ENCODE measurements at regions of chr17 and their contacts with region 1.

Region 1: DNA sequence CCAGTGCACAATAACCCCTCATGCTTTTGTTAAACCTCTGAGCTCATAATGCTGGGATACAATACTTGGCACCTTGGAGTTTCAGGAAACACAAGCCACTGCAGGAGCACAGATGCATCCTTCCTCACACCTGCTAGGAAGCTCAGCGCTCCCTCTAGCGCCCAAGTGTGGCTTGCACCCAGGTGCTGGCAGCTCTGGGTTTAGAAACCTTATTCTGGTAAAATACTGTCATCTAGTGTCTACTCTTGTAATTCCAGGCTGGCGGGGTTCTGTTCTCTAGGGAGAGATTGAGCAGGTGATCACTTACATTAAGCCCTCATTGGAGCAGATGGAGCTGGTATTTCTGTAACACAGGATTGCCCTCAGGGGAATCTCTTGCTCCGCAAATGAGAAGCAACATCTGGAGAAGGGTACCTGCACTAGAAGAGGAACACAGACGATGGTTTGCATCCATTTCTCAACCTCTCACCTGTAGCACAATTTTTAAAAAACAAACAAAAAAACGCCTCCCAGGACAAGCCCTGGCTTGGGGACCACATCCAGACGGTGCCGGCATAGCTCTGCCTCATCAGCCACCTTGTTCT is 1.5 kb downstream of the CCL1 start:
- DNase-seq: peak; percentile 97
- ATAC-seq: peak; percentile 96
- H3K4me3 Mint-ChIP-seq: no peak overlapping the region
- H3K27ac Mint-ChIP-seq: no peak overlapping the region
- H3K4me1 Mint-ChIP-seq: peaks cover 5% of the 10 kb centered on the region
- H3K27me3 Mint-ChIP-seq: peaks cover 13% of the 10 kb centered on the region; the same call in 1 of the 2 replicates
- CTCF ChIP-seq: peak; percentile 89

Region 2: GRCh38 chr17:34156741-34157589 is 204.6 kb before region 1 on chr17:
- CTCF ChIA-PET with region 1: interaction called, 24 read pairs
- POLR2A ChIA-PET with region 1: no interaction called
- DNase-seq: peak; percentile 85
- ATAC-seq: peak; percentile 45
- H3K4me3 Mint-ChIP-seq: peak overlapping the region; percentile 85
- H3K27ac Mint-ChIP-seq: peak overlapping the region; percentile 98
- H3K4me1 Mint-ChIP-seq: peaks cover 86% of the 10 kb centered on the region
- H3K27me3 Mint-ChIP-seq: peaks cover 14% of the 10 kb centered on the region
- CTCF ChIP-seq: no peak

Region 3: DNA sequence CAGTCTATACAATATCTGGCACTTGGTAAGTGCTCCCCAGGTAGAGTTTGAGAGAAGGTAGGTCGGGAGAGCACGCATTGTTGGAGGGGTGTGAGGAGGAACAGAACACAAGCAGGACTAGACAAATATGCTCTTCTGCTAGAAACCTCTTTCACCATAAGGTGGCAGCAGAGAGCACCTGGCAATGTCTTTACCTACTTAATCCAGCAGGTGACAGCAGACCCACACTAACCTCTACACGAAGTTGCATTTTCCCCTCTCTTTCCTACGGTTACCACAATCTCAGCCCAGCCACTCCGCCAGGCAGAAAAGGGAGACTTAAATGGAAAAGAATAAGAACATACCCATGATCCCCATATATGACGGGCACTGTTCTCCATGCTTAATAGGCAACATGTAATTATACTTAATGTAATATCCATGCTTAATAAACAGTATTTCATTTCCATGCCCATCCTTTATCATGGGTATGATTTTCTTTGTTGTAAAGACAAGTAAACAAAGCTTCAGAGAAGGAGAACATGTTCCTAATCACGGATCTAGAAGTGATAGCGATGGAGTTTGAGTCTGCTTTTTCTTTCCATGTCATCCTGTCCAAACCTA is 161.5 kb before region 1 on chr17:
- CTCF ChIA-PET with region 1: interaction called, 346 read pairs
- POLR2A ChIA-PET with region 1: interaction called, 7 read pairs
- DNase-seq: peak; percentile 77
- ATAC-seq: peak; percentile 94
- H3K4me3 Mint-ChIP-seq: no peak overlapping the region
- H3K27ac Mint-ChIP-seq: no peak overlapping the region
- H3K4me1 Mint-ChIP-seq: peaks cover 13% of the 10 kb centered on the region
- H3K27me3 Mint-ChIP-seq: peaks cover 11% of the 10 kb centered on the region
- CTCF ChIP-seq: peak; percentile 100

Region 4: DNA sequence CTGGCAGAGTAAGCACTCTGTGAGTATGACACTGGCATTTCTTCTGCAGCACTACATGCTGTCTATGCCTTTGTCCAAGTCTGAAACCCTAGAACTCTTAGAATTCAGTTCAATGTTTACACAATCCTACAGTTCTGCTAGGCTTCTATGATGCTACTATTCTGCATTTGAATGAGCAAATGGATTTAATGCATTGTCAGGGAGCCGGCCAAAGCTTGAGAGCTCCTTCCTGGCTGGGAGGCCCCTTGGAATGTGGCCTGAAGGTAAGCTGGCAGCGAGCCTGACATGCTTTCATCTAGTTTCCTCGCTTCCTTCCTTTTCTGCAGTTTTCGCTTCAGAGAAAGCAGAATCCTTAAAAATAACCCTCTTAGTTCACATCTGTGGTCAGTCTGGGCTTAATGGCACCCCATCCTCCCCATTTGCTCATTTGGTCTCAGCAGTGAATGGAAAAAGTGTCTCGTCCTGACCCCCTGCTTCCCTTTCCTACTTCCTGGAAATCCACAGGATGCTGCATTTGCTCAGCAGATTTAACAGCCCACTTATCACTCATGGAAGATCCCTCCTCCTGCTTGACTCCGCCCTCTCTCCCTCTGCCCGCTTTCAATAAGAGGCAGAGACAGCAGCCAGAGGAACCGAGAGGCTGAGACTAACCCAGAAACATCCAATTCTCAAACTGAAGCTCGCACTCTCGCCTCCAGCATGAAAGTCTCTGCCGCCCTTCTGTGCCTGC is 106.8 kb before region 1 on chr17 and contains the start of gene CCL2:
- CTCF ChIA-PET with region 1: interaction called, 28 read pairs
- POLR2A ChIA-PET with region 1: no interaction called
- DNase-seq: peak; percentile 63
- ATAC-seq: peak; percentile 94
- H3K4me3 Mint-ChIP-seq: peak within 1 kb of the TSS; percentile 72
- H3K27ac Mint-ChIP-seq: peak within 1 kb of the TSS; percentile 98
- H3K4me1 Mint-ChIP-seq: peaks cover 62% of the 10 kb centered on the region
- H3K27me3 Mint-ChIP-seq: peaks cover 27% of the 10 kb centered on the region
- CTCF ChIP-seq: no peak
- total RNA-seq, gene CCL2: 2.5 to 5.3 TPM (median 2.7 TPM) in 3 replicates

Region 5: GRCh38 chr17:34349751-34350150 is 11.8 kb before region 1 on chr17:
- CTCF ChIA-PET with region 1: interaction called, 37 read pairs
- POLR2A ChIA-PET with region 1: no interaction called
- DNase-seq: no peak
- ATAC-seq: no peak
- H3K4me3 Mint-ChIP-seq: no peak overlapping the region
- H3K27ac Mint-ChIP-seq: no peak overlapping the region
- H3K4me1 Mint-ChIP-seq: peaks cover 3% of the 10 kb centered on the region; the same call in 1 of the 2 replicates
- H3K27me3 Mint-ChIP-seq: peaks cover 6% of the 10 kb centered on the region
- CTCF ChIP-seq: no peak

Region 6: DNA sequence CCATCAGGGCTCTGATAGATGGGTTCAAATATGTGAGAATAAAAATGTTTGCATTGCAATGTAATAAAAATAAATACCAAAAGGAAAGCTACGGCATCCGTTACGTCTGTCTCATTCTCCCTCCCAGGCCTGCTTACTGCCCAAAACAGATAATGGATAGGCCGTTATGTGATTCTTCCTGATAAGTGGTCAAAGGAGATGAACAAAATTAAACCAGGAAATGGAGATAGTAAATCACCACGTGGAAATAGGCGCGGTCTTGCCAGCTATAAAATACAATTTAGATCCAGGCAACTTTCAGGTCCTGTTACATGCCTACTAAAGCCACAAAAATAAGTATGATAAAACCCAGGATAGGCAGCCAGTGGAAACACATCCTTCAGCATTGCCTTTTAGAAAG is 51.0 kb after region 1 on chr17:
- CTCF ChIA-PET with region 1: interaction called, 14 read pairs
- POLR2A ChIA-PET with region 1: no interaction called
- DNase-seq: no peak
- ATAC-seq: no peak
- H3K4me3 Mint-ChIP-seq: no peak overlapping the region
- H3K27ac Mint-ChIP-seq: no peak overlapping the region
- H3K4me1 Mint-ChIP-seq: peaks cover 43% of the 10 kb centered on the region
- H3K27me3 Mint-ChIP-seq: peaks cover 65% of the 10 kb centered on the region
- CTCF ChIP-seq: no peak

Measured in WTC11 (cell line).